K562 (cell line): ENCODE measurements at regions of chr16 and their contacts with region 1.

Region 1: GRCh38 chr16:11032922-11033291 is 88.5 kb downstream of the CLEC16A start:
- DNase-seq: peak in 1 of 4 experiments; percentile 36
- ATAC-seq: peak; percentile 61
- H3K4me3 ChIP-seq: no peak overlapping the region
- H3K27ac ChIP-seq: no peak overlapping the region
- H3K4me1 ChIP-seq: peaks cover 10 to 15% of the 10 kb centered on the region in 2 experiments
- H3K27me3 ChIP-seq: no peaks in the 10 kb centered on the region
- CTCF ChIP-seq: no peak
- EP300 ChIP-seq: no peak
- POLR2A ChIP-seq: no peak
- RAD21 ChIP-seq: no peak

Region 2: GRCh38 chr16:10584981-10585438 is 447.9 kb before region 1 on chr16:
- CTCF ChIA-PET with region 1: no interaction called
- POLR2A ChIA-PET with region 1: no interaction called
- in situ Hi-C with region 1: no loop called
- intact Hi-C with region 1: no loop called
- DNase-seq: no peak
- ATAC-seq: no peak
- H3K4me3 ChIP-seq: no peak overlapping the region
- H3K27ac ChIP-seq: no peak overlapping the region
- H3K4me1 ChIP-seq: peaks cover 0 to 9% of the 10 kb centered on the region in 2 experiments; a peak in 4 of 5 replicates
- H3K27me3 ChIP-seq: peaks cover 42 to 69% of the 10 kb centered on the region in 2 experiments
- CTCF ChIP-seq: no peak
- EP300 ChIP-seq: no peak
- POLR2A ChIP-seq: no peak
- RAD21 ChIP-seq: no peak

Region 3: GRCh38 chr16:11020388-11020787 is 12.5 kb before region 1 on chr16:
- CTCF ChIA-PET with region 1: no interaction called
- POLR2A ChIA-PET with region 1: interaction called, 12 read pairs
- in situ Hi-C with region 1: no loop called
- intact Hi-C with region 1: no loop called
- DNase-seq: no peak
- ATAC-seq: no peak; the same call in 2 of the 3 replicates
- H3K4me3 ChIP-seq: no peak overlapping the region
- H3K27ac ChIP-seq: no peak overlapping the region
- H3K4me1 ChIP-seq: peaks cover 4 to 5% of the 10 kb centered on the region in 2 experiments
- H3K27me3 ChIP-seq: no peaks in the 10 kb centered on the region
- CTCF ChIP-seq: no peak
- EP300 ChIP-seq: no peak
- POLR2A ChIP-seq: no peak
- RAD21 ChIP-seq: no peak